ENCODE measurements at regions of chr20 and their contacts with region 1.

Region 1: DNA sequence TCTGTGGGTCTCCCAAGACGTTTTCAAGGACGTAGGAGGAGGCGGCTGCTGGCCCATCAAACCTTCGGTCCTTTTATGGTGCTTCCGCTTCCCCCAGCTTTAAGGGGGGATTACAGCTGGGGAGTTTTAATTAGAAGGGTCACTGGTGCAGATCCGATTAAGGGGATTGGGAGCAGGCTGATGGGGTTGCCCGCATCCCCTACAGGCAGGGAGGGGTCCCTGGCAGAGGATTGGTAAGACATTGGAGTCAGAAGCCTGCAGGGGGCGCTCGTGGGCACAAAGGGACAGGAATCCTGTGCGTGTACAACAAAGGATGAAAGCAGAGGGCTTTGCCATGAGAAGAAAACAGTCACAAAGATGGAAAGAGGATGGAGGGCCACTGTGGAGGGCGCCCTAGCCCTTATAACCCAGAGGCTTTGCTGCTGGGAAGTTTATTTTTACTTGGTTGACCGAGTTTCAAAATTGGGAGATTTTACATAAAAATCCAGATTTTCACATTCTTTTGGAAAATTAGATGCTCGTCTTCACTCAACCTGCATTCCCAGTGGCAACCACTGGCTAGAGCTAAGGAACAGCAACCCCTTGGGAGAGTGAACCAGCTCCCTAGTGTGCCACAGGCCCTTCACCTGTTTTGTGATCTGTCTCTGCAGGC is 97.9 kb downstream of the KCNB1 start:
- DNase-seq: peak; percentile 87 to 91
- H3K4me3 ChIP-seq: no peak overlapping the region
- H3K4me3 Mint-ChIP-seq: no peak overlapping the region
- H3K27ac Mint-ChIP-seq: no peak overlapping the region
- H3K4me1 ChIP-seq: no peaks in the 10 kb centered on the region
- H3K4me1 Mint-ChIP-seq: no peaks in the 10 kb centered on the region
- H3K27me3 ChIP-seq: no peaks in the 10 kb centered on the region
- H3K27me3 Mint-ChIP-seq: peaks cover 20% of the 10 kb centered on the region
- CTCF ChIP-seq: peak; percentile 93 to 96

Region 2: GRCh38 chr20:49418809-49419208 is 34.2 kb after region 1 on chr20:
- CTCF ChIA-PET with region 1: interaction called, 15 read pairs
- POLR2A ChIA-PET with region 1: no interaction called
- intact Hi-C with region 1: no loop called
- DNase-seq: no peak
- H3K4me3 ChIP-seq: no peak overlapping the region
- H3K4me3 Mint-ChIP-seq: no peak overlapping the region
- H3K27ac Mint-ChIP-seq: no peak overlapping the region
- H3K4me1 ChIP-seq: peaks cover 10% of the 10 kb centered on the region
- H3K4me1 Mint-ChIP-seq: peaks cover 20% of the 10 kb centered on the region
- H3K27me3 ChIP-seq: no peaks in the 10 kb centered on the region
- H3K27me3 Mint-ChIP-seq: peaks cover 3% of the 10 kb centered on the region
- CTCF ChIP-seq: no peak

Measured in Caco-2 (cell line).